ENCODE measurements at regions of chr2 and their contacts with region 1.

Region 1: DNA sequence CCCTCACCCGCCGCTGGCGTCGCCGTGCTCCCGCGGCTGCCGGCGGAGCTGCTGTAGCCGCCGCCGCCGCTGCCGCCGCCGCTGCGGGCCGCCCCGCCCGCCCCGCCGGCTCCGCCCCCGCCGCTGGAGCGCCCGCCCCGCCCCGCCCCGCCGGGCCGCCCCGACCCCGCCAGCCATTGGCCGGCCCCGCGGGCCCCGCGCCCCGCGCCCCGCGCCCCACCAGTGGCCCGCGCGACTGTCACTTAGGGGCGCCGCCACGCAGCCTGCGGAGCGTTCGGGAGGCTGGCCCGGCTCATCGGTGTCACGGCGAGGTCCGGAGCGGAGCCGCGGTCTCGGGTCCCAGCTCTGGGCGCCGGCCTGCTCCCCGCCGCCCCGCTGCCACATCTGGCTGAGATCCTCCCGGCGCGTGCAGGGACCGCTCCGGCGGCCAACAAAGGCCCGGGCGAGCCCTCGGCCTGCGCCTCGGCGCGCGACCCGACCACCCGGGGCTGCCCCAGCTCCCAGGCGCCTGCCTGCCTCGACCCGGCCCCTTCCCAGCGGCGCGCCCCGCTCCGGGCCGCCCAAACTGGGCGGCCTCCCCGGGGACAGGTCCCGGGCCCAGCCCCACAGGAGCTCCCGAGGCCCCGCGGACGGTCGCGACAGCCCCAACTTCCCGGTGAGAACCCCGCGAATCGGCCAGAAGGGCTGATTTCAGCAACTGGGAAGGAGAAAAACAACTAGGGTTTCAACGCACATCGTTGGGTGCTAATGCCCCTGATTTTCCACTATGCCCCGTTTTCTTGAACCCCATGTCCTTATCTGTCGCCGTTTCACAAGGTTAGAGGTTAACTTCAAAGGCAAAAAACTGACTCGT is at the start of gene MGAT4A:
- DNase-seq: peak; percentile 85 to 94 (median 88)
- ATAC-seq: peak; percentile 57 to 97 (median 92)
- H3K4me3 ChIP-seq: peak within 1 kb of the TSS; percentile 64 to 98 (median 84)
- H3K27ac ChIP-seq: peak within 1 kb of the TSS; percentile 75 to 97 (median 94)
- H3K4me1 ChIP-seq: peaks cover 4 to 79% (median 28%) of the 10 kb centered on the region in 12 donors
- H3K27me3 ChIP-seq: no peaks in the 10 kb centered on the region
- CTCF ChIP-seq: no peak
- POLR2A ChIP-seq: peak in 1 of 2 donors; percentile 95
- total RNA-seq, gene MGAT4A: 10.2 to 45.0 (median 18.2) TPM

Region 2: DNA sequence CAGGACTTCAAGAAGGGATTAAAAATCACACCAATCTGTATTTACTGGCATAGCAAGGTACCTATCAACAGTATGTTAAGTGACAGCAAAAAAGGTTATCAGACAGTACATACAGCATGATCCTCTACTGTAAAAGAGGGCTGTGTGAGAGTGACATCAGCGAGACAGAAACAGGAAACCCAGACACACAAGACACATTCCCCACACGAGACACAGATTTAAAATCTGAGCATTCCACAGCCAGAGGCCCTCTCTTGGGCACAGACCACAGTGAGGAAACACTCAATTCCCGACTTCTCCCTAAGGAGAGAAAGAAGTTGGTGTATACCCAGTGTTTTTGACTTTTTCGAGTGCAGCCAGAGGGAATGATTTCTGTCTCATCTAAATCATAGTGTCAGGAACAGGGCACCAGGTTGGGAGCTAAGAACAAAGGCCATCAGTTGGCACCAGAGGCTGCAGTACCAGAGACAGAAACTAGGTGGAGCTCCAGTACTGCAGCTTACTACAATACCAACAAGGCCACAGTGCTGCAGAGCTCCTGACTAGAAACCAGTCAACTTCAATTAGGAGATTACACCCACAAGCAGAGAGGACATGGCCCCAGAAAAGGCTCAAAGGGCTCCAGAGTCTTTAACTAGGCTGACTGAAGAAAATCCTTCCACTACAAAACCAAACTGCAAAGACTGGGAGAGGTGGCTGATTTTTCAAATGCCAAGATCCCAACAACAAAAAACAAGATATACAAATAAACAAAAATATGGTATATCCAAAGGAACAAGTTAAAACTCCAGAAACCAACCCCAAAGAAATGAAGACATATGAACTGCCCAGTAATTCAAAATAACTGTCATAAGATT is 81.9 kb before region 1 on chr2:
- intact Hi-C with region 1: loop called in 5 of 10 experiments (anchors 5 to 10 kb)
- DNase-seq: peak in 4 of 5 donors; percentile 71 to 74 (median 72)
- ATAC-seq: peak; percentile 61 to 94 (median 92)
- H3K4me3 ChIP-seq: no peak overlapping the region
- H3K27ac ChIP-seq: peak overlapping the region in 1 of 12 donors; percentile 29
- H3K4me1 ChIP-seq: peaks cover 0 to 27% (median 0%) of the 10 kb centered on the region in 12 donors
- H3K27me3 ChIP-seq: no peaks in the 10 kb centered on the region
- CTCF ChIP-seq: peak; percentile 97 to 100 (median 98)
- POLR2A ChIP-seq: no peak

Region 3: GRCh38 chr2:98654699-98655495 is 76.4 kb before region 1 on chr2:
- intact Hi-C with region 1: loop called in 4 of 10 experiments (anchors 5 to 10 kb)
- DNase-seq: no peak
- ATAC-seq: no peak
- H3K4me3 ChIP-seq: no peak overlapping the region
- H3K27ac ChIP-seq: peak overlapping the region in 2 of 12 donors; percentile 3 to 54
- H3K4me1 ChIP-seq: peaks cover 0 to 44% (median 0%) of the 10 kb centered on the region in 12 donors
- H3K27me3 ChIP-seq: no peaks in the 10 kb centered on the region
- CTCF ChIP-seq: no peak
- POLR2A ChIP-seq: no peak

Region 4: DNA sequence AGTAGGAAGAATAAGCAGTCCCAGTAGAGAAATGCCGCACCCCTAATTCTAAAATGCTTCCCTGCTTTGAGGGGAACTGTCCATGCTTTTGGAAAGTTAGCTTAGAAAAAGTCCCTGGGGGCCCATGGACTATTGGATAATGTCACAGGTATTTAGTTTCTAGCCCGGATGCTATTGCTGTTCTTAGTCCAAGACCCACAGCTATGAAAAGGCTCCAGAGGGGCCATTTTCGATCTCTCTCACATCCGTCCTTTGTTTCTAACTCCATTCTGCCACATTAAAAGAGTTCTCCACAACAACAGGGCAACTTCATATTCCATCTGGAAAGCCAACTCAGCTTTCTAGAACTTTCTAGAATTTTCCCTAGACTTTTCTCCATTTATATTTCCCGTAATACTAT is 47.5 kb before region 1 on chr2:
- intact Hi-C with region 1: loop called in 1 of 10 experiments (anchors 5 kb)
- DNase-seq: no peak
- ATAC-seq: peak in 1 of 4 donors; percentile 89
- H3K4me3 ChIP-seq: no peak overlapping the region
- H3K27ac ChIP-seq: peak overlapping the region in 9 of 12 donors; percentile 6 to 59 (median 14)
- H3K4me1 ChIP-seq: peaks cover 0 to 12% (median 4%) of the 10 kb centered on the region in 12 donors
- H3K27me3 ChIP-seq: no peaks in the 10 kb centered on the region
- CTCF ChIP-seq: no peak
- POLR2A ChIP-seq: no peak

Region 5: GRCh38 chr2:98822301-98823164 is 91.3 kb after region 1 on chr2:
- intact Hi-C with region 1: loop called in 7 of 10 experiments (anchors 2 to 10 kb)
- DNase-seq: peak; percentile 74 to 87 (median 78)
- ATAC-seq: peak; percentile 77 to 89 (median 82)
- H3K4me3 ChIP-seq: peak overlapping the region; percentile 38 to 68 (median 54)
- H3K27ac ChIP-seq: peak overlapping the region; percentile 76 to 98 (median 92)
- H3K4me1 ChIP-seq: peaks cover 0 to 59% (median 31%) of the 10 kb centered on the region in 12 donors
- H3K27me3 ChIP-seq: peaks cover 0 to 7% (median 0%) of the 10 kb centered on the region in 9 donors
- CTCF ChIP-seq: peak in 9 of 12 donors; percentile 18 to 54 (median 35)
- POLR2A ChIP-seq: peak in 1 of 2 donors; percentile 28

Region 6: GRCh38 chr2:98828793-98829371 is 97.6 kb after region 1 on chr2:
- intact Hi-C with region 1: loop called in 6 of 10 experiments (anchors 2 to 10 kb)
- DNase-seq: no peak
- ATAC-seq: no peak
- H3K4me3 ChIP-seq: no peak overlapping the region
- H3K27ac ChIP-seq: no peak overlapping the region
- H3K4me1 ChIP-seq: peaks cover 0 to 50% (median 19%) of the 10 kb centered on the region in 12 donors
- H3K27me3 ChIP-seq: no peaks in the 10 kb centered on the region
- CTCF ChIP-seq: no peak
- POLR2A ChIP-seq: no peak

Region 7: GRCh38 chr2:98835831-98836385 is 104.6 kb after region 1 on chr2:
- intact Hi-C with region 1: loop called in 2 of 10 experiments (anchors 2 to 5 kb)
- DNase-seq: no peak
- ATAC-seq: no peak
- H3K4me3 ChIP-seq: no peak overlapping the region
- H3K27ac ChIP-seq: peak overlapping the region in 1 of 12 donors; percentile 34
- H3K4me1 ChIP-seq: peaks cover 0 to 24% (median 11%) of the 10 kb centered on the region in 12 donors
- H3K27me3 ChIP-seq: no peaks in the 10 kb centered on the region
- CTCF ChIP-seq: no peak
- POLR2A ChIP-seq: no peak

Measured in heart left ventricle (tissue), 16 donors.